ENCODE measurements at regions of chr7 and their contacts with region 1.

Region 1: DNA sequence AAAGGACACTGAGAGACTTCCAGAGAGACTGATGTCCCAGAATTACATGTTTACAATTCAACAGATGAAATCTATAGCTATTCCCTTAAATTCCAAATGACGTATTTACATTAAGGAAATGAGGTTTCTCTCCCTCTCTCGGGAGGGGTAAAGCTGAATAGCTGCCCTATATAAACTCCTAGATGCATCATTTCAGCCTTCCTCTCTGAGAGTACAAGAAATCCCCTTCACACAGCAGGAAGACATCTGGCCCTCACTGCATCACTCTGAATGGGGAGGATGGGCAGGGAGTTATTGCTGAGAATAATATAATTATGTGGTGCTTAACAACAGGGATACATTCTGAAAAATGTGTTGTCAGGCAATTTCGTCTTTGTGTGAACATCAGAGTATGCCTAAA is 11.0 kb downstream of the POT1 start:
- DNase-seq: no peak
- H3K4me3 ChIP-seq: no peak overlapping the region
- H3K27ac ChIP-seq: no peak overlapping the region
- H3K4me1 ChIP-seq: no peaks in the 10 kb centered on the region
- H3K27me3 ChIP-seq: no peaks in the 10 kb centered on the region
- CTCF ChIP-seq: no peak
- POLR2A ChIP-seq: no peak

Region 2: DNA sequence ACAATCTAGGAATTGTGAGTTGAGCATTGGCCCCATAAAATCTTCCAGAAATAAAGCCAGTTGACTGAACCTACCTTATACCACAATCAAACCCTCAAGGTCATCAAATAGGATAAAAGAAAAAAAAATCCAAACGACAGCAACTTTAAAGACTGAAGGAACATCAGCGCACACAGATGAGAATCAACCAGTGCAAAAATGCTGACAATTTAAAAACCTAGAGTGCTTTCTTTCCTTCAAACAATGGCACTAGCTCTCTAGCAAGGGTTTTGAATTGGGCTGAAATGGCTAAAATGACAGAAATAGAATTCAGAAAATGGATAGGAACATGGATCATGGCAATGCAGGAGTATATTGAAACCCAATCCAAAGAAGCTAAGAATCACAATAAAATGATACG is 27.0 kb after region 1 on chr7:
- intact Hi-C with region 1: loop called (anchors 2 kb)
- DNase-seq: no peak
- H3K4me3 ChIP-seq: no peak overlapping the region
- H3K27ac ChIP-seq: no peak overlapping the region
- H3K4me1 ChIP-seq: no peaks in the 10 kb centered on the region
- H3K27me3 ChIP-seq: no peaks in the 10 kb centered on the region
- CTCF ChIP-seq: no peak
- POLR2A ChIP-seq: no peak

Region 3: GRCh38 chr7:125136755-125137547 is 218.3 kb after region 1 on chr7:
- intact Hi-C with region 1: no loop called
- DNase-seq: no peak
- H3K4me3 ChIP-seq: no peak overlapping the region
- H3K27ac ChIP-seq: no peak overlapping the region
- H3K4me1 ChIP-seq: no peaks in the 10 kb centered on the region
- H3K27me3 ChIP-seq: no peaks in the 10 kb centered on the region
- CTCF ChIP-seq: no peak
- POLR2A ChIP-seq: no peak

Region 4: DNA sequence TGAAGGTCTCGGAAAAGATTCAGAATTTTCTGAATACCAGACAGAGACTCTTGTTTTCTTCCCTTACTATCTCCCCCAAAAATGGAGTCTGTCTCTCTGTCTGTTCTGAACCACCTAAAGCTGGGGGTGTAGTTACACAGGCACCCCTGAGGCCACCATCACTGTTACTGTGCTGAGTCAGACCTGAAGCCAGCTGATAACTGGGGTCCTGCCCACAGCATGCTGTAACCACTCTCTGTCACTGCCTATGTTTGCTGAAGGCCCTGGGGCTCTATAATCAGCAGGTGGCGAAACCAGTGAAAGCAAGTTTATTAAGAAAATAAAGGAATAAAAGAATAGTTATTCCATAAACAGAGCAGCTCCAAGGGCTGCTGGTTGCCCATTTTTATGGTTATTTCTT is 586.2 kb after region 1 on chr7:
- intact Hi-C with region 1: loop called (anchors 5 kb)
- DNase-seq: no peak
- H3K4me3 ChIP-seq: no peak overlapping the region
- H3K27ac ChIP-seq: no peak overlapping the region
- H3K4me1 ChIP-seq: no peaks in the 10 kb centered on the region
- H3K27me3 ChIP-seq: no peaks in the 10 kb centered on the region
- CTCF ChIP-seq: no peak
- POLR2A ChIP-seq: no peak

Measured in breast epithelium (tissue), 4 donors.